Prostate gland (tissue), 2 donors: ENCODE measurements at regions of chr6 and their contacts with region 1.

Region 1: DNA sequence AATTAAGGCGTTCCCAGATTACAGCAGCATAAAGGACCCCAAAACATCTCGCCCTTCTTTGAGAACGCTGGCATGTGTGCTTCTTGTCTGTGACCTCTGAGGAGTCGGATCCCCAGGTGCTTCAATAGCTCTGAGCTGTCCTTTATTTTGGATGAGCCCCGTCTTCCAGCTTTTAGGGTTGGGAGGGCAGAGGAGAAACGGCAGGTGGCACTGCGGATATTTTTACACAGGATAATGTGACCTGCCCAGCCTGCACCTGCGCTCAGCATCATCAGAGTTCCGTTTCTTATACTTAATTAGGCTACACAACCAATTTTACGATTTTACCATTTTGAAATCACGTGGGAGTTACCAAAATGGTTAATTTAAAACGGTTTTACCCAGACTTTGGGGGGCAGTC is 147.7 kb upstream of the RPS6KA2 start:
- DNase-seq: no peak
- H3K4me3 ChIP-seq: no peak overlapping the region
- H3K27ac ChIP-seq: no peak overlapping the region
- H3K4me1 ChIP-seq: no peaks in the 10 kb centered on the region
- H3K27me3 ChIP-seq: no peaks in the 10 kb centered on the region
- CTCF ChIP-seq: no peak
- POLR2A ChIP-seq: no peak

Region 2: GRCh38 chr6:166830185-166830890 is 55.6 kb after region 1 on chr6:
- intact Hi-C with region 1: no loop called
- DNase-seq: no peak
- H3K4me3 ChIP-seq: no peak overlapping the region
- H3K27ac ChIP-seq: no peak overlapping the region
- H3K4me1 ChIP-seq: no peaks in the 10 kb centered on the region
- H3K27me3 ChIP-seq: no peaks in the 10 kb centered on the region
- CTCF ChIP-seq: no peak
- POLR2A ChIP-seq: no peak

Region 3: GRCh38 chr6:167141667-167142432 is 367.1 kb after region 1 on chr6:
- intact Hi-C with region 1: loop called (anchors 1 kb)
- DNase-seq: peak; percentile 15
- H3K4me3 ChIP-seq: no peak overlapping the region
- H3K27ac ChIP-seq: no peak overlapping the region
- H3K4me1 ChIP-seq: no peaks in the 10 kb centered on the region
- H3K27me3 ChIP-seq: no peaks in the 10 kb centered on the region
- CTCF ChIP-seq: peak in 3 of 4 experiments; percentile 42 to 72 (median 68)
- POLR2A ChIP-seq: no peak